ENCODE measurements at regions of chr2 and their contacts with region 1.

Region 1: DNA sequence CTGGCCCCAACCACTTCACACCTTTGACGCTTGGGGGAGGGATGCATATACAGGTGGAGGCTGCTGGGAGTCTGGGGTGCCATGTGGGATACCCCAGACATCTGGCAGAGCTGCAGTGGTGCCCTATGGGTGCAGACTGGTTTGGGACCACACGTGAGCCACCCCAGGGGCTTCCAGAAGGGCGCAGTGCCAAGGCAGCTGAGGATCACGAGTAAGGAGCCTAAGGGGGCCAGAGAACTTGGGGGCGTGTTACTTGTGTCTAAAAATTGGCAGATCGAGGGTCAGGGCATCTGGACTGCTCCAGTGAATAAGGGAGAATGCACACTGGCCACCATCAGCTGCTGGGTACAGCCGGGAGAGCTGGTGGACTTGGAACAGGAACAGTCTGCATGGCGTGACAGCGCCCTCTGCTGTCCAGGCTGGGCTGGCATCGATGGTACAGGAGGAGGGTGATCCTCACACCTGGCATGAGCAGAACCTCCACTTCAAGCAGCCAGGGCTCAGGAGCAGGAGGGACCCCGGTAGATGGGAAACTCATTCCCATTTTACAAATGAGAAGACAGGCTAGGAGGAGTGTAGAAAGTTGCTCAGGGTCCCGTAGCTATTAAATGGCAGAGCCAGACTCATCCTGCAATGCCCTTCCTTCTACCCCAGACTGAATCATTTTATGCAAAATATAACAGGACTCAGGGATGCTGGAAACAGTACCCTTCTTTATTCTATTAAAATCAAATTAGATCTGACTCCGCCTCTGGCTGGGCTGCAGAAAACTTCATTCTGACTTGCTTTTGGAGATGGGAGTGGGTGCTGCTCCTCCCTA is 60.4 kb downstream of the ATOH8 start:
- DNase-seq: peak; percentile 76 to 92
- ATAC-seq: peak; percentile 94

Region 2: DNA sequence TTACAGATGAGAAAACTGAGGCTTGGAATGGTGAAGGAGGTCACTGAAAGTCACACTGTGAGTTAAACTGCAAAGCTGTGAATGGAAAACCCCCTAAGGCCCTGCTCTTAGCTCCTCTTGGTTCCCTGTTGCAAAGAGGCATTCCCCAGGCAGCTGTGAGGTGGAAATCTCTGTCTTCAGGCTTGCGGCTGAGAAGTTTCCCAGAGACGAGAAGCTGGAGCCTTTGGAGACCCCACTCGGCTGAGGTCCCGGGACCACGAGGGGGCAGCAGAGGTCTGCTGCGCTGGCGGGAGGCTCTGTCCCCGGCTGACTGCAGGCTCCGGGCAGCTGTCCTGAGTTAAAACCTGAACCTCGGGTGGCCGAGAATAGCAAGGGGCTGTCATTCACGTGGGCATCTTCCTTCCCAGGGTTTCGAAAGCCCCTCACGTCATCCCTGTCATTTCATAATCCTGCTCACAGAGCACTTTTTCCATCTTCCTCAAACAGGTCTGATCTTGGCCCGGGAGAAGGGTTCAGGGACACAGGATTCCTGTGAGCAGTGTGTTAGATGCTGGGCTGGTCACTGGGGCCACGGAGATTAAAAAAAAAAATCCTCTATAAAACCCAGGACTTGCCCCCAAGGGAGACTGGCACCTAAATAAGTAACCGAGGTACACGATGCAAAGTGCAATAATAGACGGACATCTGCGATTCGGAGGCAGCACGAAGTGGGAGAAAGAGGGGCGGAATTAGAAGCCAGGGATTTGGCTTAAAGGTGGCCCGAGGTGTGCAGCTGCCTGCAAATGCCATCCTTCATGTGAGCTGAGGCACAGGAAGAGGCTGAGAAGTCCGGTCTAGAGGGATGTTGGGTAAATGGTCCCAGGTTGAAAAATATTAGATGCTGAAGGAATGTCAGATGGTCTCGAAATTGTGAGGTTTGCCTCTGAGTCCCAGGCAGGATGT is 85.0 kb before region 1 on chr2:
- intact Hi-C with region 1: loop called (anchors 5 kb)
- DNase-seq: peak; percentile 73 to 91
- ATAC-seq: peak; percentile 96

Region 3: DNA sequence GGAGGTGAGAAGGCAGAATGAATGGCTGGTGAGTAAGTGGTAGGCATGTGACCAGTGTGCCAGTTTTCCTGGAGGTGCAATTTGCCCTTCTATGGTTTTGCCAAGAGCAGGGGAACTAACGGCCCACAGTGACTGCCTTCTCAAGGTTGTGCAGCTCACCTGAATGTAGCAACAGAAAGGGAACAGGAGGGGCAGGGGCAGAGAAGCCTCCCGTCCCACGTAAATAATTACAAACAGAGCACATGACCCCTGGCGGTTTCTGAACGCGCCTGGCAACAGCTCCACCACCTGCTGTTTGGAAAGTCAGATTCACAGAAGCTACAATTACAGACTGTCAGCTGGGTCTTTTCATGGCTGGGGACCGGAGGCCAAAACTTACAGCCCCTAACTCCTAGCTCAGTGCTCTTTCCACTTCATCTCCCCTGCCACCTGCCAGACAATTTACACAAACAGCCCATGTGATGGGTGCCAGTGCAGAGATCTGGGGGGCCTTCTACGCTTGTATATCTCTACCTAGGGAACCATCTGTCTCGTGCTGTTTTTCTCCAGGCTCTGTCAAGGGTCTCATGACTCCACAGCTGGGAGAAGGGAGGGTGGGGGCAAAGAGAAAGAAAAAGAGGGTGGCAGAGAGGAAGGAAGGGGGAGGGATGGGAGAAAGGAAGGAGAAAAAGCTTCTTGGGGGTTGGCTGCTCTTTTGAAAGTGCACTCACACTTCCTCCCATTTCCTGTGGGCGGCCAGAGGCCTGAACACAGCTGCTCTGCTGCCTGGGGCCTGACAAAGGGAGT is 221.9 kb after region 1 on chr2:
- intact Hi-C with region 1: no loop called
- DNase-seq: peak; percentile 69 to 79
- ATAC-seq: peak; percentile 62

Measured in left colon (tissue), 2 donors.